ENCODE measurements at regions of chrX and their contacts with region 1.

Region 1: GRCh38 chrX:69387567-69388487 is 116.3 kb upstream of the NALF2 start:
- H3K4me3 ChIP-seq: no peak overlapping the region
- H3K27ac ChIP-seq: no peak overlapping the region
- H3K4me1 ChIP-seq: no peaks in the 10 kb centered on the region
- CTCF ChIP-seq: peak; percentile 87

Region 2: DNA sequence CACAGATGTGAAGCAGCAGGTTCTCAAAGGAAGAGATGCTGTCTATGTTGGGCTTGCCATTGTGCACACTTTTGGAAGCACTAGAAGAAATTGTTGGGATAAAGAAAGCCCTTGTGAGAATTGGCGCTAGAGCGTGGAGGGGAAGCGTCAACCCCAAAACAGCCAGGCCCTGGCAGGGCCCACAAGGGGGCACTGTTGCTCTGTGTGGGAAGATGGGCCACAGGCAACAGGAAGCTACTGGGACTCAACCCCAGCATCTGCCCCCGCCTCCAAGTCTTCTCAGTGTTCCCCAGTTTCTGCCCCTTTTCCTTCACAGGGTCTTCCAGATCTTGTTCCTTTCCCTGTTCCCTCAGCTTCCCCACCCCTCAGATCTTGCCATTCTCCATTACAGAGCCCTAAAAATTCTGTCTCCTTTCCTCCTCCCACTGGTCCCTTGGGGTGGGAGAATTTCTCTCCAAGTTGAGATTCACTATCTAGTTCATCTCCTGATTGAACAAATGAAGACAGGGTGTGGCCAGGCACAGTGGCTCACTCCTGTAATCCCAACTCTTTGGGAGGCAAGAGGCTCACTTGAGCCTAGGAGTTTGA is 654.8 kb before region 1 on chrX:
- CTCF ChIA-PET with region 1: interaction called, 18 read pairs
- POLR2A ChIA-PET with region 1: no interaction called
- H3K4me3 ChIP-seq: no peak overlapping the region
- H3K27ac ChIP-seq: no peak overlapping the region
- H3K4me1 ChIP-seq: no peaks in the 10 kb centered on the region
- CTCF ChIP-seq: peak; percentile 83

Region 3: GRCh38 chrX:68822641-68823410 is 565.0 kb before region 1 on chrX:
- CTCF ChIA-PET with region 1: interaction called, 29 read pairs
- POLR2A ChIA-PET with region 1: interaction called, 3 read pairs
- H3K4me3 ChIP-seq: no peak overlapping the region
- H3K27ac ChIP-seq: no peak overlapping the region
- H3K4me1 ChIP-seq: no peaks in the 10 kb centered on the region
- CTCF ChIP-seq: peak; percentile 90

Region 4: GRCh38 chrX:69285881-69286564 is 101.8 kb before region 1 on chrX:
- CTCF ChIA-PET with region 1: interaction called, 12 read pairs
- POLR2A ChIA-PET with region 1: no interaction called
- H3K4me3 ChIP-seq: no peak overlapping the region
- H3K27ac ChIP-seq: no peak overlapping the region
- H3K4me1 ChIP-seq: no peaks in the 10 kb centered on the region
- CTCF ChIP-seq: peak; percentile 95

Region 5: GRCh38 chrX:69374569-69374968 is 13.3 kb before region 1 on chrX:
- CTCF ChIA-PET with region 1: interaction called, 30 read pairs
- POLR2A ChIA-PET with region 1: no interaction called
- H3K4me3 ChIP-seq: no peak overlapping the region
- H3K27ac ChIP-seq: no peak overlapping the region
- H3K4me1 ChIP-seq: no peaks in the 10 kb centered on the region
- CTCF ChIP-seq: no peak

Region 6: DNA sequence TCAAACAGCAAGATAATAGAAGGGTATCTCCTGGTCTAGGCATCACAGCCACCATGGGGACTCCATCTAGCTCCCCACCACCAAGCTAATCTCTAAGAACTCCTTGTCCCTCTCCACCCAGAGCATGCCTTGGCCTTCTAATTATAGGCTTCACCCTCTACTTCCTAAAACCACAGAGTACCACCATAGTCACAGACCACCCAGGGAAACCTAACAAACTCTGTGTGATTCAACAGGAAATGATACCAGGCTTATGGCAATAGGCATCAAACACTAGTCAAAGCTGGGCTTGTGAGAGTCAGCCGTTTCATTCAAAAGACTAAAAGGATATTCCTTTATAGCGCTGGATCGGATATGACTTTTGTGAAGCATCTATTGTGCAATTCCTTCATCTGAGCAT is 24.8 kb after region 1 on chrX:
- CTCF ChIA-PET with region 1: interaction called, 13 read pairs
- POLR2A ChIA-PET with region 1: no interaction called
- H3K4me3 ChIP-seq: no peak overlapping the region
- H3K27ac ChIP-seq: no peak overlapping the region
- H3K4me1 ChIP-seq: no peaks in the 10 kb centered on the region
- CTCF ChIP-seq: no peak